GM13977 (cell line): ENCODE measurements at regions of chr22 and their contacts with region 1.

Region 1: GRCh38 chr22:33271390-33272161 is 213.4 kb upstream of the SYN3 start:
- DNase-seq: peak; percentile 64
- CTCF ChIP-seq: no peak

Region 2: GRCh38 chr22:33083212-33083611 is 188.4 kb before region 1 on chr22:
- in situ Hi-C with region 1: loop called (anchors 10 kb)
- DNase-seq: peak; percentile 36
- CTCF ChIP-seq: peak; percentile 35

Region 3: GRCh38 chr22:33314316-33314715 is 42.7 kb after region 1 on chr22:
- in situ Hi-C with region 1: no loop called
- DNase-seq: no peak
- CTCF ChIP-seq: no peak